ENCODE measurements at regions of chr3 and their contacts with region 1.

Region 1: DNA sequence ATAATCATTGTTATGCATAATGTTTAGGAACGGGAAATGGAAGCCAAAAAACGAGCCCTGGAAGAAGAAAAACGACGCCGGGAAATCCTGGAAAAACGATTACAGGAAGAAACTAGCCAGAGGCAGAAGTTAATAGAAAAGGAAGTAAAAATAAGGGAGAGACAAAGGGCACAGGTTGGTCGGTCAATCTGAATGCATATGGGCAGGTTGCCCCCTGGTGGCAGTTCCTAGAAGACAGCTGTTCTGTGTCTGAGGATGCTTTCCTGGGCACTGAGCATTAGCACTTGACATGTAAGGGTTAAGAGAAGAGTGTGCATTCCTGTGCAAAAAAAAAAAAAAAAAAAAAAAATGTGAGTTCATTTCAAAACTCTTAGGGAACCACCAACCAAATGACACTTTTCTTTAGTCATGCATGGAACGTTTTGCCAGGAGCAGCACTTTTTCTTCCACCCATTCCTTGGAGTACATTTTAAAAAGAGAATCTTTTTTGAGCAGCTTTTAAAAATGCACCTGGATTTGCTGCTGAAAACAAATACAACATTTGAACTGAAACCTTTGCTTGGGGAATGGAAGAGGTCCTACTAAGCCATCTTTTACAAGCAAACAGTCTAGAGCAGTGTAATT is 11.1 kb upstream of the ABHD10 start:
- DNase-seq: peak; percentile 38
- CTCF ChIP-seq: peak; percentile 86

Region 2: DNA sequence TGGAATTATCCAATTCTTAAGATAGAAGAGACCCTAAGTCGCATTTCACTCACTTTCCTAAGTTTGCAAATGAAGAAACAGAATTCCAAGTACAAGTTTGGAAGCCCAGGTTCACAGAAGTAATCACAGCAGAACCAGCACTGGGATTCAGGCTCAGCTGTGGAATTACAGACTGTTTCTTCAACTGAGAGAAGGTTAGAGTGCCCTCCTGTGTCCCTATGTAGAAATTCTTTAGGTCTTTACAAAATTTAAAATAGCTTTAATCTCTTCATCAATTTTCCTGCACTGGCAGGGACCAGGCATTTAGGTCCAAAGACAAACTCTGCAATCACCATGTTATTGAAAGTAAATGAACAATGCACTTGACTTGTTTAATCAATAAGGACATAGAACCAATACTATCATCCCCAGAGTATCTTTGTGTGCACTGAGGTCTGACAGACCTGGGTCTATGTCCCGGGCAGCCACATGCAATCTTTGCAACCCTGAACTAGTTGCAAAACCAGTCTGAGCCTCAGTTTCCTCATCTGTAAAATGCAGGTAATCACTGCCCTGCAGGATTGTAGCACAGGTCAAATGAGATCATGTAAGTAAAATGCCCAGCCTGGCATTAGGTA is 276.4 kb before region 1 on chr3:
- CTCF ChIA-PET with region 1: interaction called, 10 read pairs
- POLR2A ChIA-PET with region 1: no interaction called
- DNase-seq: peak; percentile 28
- CTCF ChIP-seq: peak; percentile 40

Region 3: GRCh38 chr3:111708157-111708771 is 259.5 kb before region 1 on chr3:
- CTCF ChIA-PET with region 1: interaction called, 327 read pairs
- POLR2A ChIA-PET with region 1: no interaction called
- DNase-seq: no peak
- CTCF ChIP-seq: no peak

Region 4: GRCh38 chr3:111956995-111957734 is 10.6 kb before region 1 on chr3:
- CTCF ChIA-PET with region 1: interaction called, 60 read pairs
- POLR2A ChIA-PET with region 1: no interaction called
- DNase-seq: no peak
- CTCF ChIP-seq: no peak

Region 5: DNA sequence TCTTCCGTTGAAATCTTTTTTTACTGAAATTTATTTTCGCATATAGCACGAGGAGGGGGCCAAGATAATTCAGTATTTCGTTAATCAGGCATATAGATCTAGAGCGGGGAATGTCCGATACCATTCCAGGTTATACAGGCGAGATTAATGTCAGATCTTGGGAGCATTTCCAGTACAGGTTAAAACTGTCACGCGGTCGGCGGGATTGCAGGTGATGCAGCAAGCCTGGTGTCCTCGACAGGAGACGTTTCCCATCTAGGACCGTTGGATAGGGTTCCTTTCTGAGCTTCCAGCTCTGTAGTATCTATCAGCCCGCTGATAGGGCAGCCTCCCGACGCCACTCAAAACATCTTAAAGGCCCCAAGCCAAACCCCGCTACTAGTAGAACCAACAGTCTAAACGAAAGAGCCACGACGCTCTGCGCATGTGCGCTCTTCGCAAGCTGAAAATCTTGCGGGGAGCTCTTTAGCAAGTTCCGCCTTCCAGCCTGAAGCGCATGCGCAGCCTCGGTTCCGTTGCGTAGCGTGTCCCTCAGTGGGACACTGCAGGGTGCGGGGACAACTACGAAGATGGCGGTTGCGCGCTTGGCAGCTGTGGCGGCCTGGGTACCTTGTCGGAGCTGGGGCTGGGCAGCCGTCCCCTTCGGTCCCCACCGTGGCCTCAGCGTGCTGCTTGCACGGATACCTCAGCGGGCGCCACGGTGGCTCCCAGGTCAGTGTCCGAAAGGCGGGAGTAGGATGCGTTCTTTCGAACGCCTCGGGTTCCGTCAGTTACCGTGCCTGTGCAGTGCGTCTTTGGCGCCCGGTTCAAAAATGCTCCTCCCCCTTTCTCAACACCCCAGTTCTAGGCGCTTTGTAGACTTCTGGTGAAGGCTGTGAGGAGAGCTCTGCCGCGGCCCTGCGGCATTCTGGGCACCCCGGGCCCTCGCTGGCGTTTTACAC is 11.0 kb after region 1 on chr3 and contains the start of gene ABHD10:
- CTCF ChIA-PET with region 1: interaction called, 74 read pairs
- POLR2A ChIA-PET with region 1: interaction called, 3 read pairs
- DNase-seq: peak; percentile 92
- CTCF ChIP-seq: no peak

Region 6: DNA sequence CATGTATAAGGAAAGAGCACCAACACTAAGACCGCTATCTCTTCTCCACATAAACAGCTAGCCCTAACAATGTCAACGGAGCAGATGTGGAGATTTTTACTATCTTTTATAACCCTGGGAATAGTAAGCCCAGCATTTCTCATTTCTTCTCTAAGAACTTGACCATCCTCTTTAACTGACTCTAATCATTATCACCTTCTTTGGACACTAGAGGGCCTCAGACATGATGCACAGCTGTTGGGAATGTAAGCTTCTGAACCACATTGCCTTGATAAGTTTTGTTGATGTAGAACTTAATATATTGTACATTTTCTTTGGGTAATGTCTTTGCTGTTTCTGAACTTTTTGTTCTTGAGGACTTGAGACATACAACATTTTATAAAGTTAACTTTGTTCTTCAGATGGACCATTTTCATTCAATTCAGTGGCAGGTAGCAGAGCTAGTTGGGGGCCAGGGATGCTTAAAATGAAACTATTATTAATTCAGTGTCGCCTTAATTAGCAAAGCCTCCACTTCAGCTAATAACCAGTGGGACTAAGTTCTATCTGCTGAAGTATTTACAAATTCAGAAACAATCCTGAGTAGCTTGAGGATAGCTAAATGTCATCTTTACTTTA is 21.4 kb after region 1 on chr3:
- CTCF ChIA-PET with region 1: interaction called, 14 read pairs
- POLR2A ChIA-PET with region 1: no interaction called
- DNase-seq: peak; percentile 41
- CTCF ChIP-seq: peak; percentile 85

Measured in GM10248 (cell line).